CD4-positive, alpha-beta memory T cell (primary cell): ENCODE measurements at regions of chr1 and their contacts with region 1.

Region 1: DNA sequence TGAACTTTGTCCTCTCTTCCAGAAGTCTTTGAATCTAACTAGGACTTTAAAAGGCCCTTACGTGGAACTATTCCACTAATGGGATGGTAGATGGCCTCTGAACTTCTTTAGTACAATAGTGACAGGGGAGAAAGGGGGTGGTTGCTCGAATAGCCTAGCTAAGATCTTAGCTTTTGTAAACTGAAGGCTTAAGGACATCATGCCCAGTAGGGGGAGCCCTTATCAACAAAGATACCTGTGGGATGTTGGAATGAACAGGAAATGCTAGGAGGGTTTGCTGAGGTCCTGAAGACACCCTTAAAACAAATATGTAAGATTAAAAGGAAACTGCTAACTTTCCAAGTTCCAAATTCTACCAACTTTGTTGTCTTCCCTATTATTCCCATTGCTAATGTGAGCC is 33.2 kb downstream of the NHLH2 start:
- DNase-seq: peak; percentile 19 to 51 (median 31)
- H3K4me3 ChIP-seq: no peak overlapping the region
- H3K4me3 Mint-ChIP-seq: no peak overlapping the region
- H3K27ac ChIP-seq: no peak overlapping the region
- H3K27ac Mint-ChIP-seq: no peak overlapping the region
- H3K4me1 ChIP-seq: no peaks in the 10 kb centered on the region
- H3K4me1 Mint-ChIP-seq: peaks cover 0 to 2% (median 0%) of the 10 kb centered on the region in 4 donors
- H3K27me3 ChIP-seq: no peaks in the 10 kb centered on the region
- H3K27me3 Mint-ChIP-seq: peaks cover 11 to 12% of the 10 kb centered on the region in 2 donors

Region 2: DNA sequence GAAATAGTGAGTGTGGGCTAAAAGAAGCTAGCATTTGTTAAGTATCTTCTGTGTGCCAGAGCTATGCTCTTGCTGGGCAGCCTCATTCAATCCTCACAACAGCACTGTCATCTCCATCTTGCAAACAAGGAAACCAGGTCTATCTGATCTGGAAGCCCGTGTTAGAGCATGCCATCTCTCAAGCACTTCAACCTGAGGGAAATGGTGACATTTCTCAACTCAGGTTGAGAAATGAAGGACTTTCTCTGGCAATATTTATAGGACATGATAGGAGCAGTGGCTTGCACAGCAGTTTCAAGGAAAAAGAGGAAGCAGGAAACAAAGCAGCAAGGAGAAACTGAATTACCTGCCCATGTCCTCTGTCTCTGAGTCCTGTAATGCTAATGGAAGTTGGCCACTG is 44.1 kb before region 1 on chr1:
- CTCF ChIA-PET with region 1: no interaction called
- POLR2A ChIA-PET with region 1: no interaction called
- intact Hi-C with region 1: no loop called
- DNase-seq: no peak
- H3K4me3 ChIP-seq: no peak overlapping the region
- H3K4me3 Mint-ChIP-seq: no peak overlapping the region
- H3K27ac ChIP-seq: no peak overlapping the region
- H3K27ac Mint-ChIP-seq: no peak overlapping the region
- H3K4me1 ChIP-seq: no peaks in the 10 kb centered on the region
- H3K4me1 Mint-ChIP-seq: no peaks in the 10 kb centered on the region
- H3K27me3 ChIP-seq: no peaks in the 10 kb centered on the region
- H3K27me3 Mint-ChIP-seq: peaks cover 1 to 7% of the 10 kb centered on the region in 2 donors

Region 3: GRCh38 chr1:115949156-115949555 is 141.4 kb after region 1 on chr1:
- CTCF ChIA-PET with region 1: no interaction called
- POLR2A ChIA-PET with region 1: no interaction called
- intact Hi-C with region 1: no loop called
- DNase-seq: no peak
- H3K4me3 ChIP-seq: no peak overlapping the region
- H3K4me3 Mint-ChIP-seq: no peak overlapping the region
- H3K27ac ChIP-seq: no peak overlapping the region
- H3K27ac Mint-ChIP-seq: no peak overlapping the region
- H3K4me1 ChIP-seq: no peaks in the 10 kb centered on the region
- H3K4me1 Mint-ChIP-seq: no peaks in the 10 kb centered on the region
- H3K27me3 ChIP-seq: no peaks in the 10 kb centered on the region
- H3K27me3 Mint-ChIP-seq: peaks cover 7 to 14% of the 10 kb centered on the region in 2 donors

Region 4: DNA sequence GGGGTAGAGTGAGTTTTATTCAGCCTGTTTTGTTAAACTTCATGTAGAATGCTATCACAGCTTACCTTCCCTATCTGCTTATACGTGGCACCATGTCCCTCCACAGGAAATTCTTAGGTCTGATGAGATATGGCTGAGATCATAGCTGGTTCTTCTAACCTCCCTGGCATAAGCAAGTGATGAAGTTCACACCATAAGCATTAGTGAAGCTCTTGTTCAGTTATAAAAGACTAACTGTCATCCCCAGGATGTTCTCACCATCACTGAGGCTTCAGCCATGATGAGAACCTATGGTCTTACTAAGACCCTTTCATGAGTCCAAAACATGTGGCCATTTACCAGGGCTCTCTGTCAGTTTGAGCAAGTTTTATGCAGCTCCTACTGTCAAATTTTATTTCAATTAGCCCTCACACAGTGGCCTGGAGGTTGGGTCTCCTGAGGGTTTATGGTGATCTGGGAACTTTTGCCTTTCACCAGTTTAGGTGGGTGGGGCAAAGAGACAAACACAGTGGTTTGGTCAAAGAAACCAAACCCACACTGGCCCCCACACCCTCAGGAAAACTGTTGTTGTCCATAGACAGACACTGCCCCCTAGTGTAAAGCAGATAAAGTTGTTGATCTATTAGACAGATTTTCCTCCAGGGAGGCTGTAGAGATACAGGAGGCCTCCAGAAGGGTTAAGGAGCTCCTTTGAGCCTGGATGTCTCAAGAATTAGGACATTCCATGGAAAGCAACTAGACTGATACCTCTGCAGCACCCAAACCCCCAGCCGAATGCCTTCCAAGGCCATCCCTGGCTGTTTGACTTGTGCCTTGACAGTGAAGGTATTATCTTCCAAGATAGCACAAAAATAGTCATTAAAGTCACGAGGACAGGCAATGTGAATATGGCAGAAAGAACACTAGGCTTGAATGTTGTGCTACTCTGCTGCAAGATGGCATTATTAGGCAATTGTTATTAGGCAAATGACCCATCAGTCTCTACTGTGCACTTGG is 173.6 kb after region 1 on chr1:
- CTCF ChIA-PET with region 1: interaction called, 29 read pairs
- POLR2A ChIA-PET with region 1: interaction called, 3 read pairs
- intact Hi-C with region 1: no loop called
- DNase-seq: peak in 3 of 5 donors; percentile 20 to 36 (median 24)
- H3K4me3 ChIP-seq: no peak overlapping the region
- H3K4me3 Mint-ChIP-seq: no peak overlapping the region
- H3K27ac ChIP-seq: no peak overlapping the region
- H3K27ac Mint-ChIP-seq: no peak overlapping the region
- H3K4me1 ChIP-seq: peaks cover 4% of the 10 kb centered on the region
- H3K4me1 Mint-ChIP-seq: peaks cover 0 to 9% (median 7%) of the 10 kb centered on the region in 4 donors
- H3K27me3 ChIP-seq: no peaks in the 10 kb centered on the region
- H3K27me3 Mint-ChIP-seq: peaks cover 9% of the 10 kb centered on the region in 2 donors

Region 5: DNA sequence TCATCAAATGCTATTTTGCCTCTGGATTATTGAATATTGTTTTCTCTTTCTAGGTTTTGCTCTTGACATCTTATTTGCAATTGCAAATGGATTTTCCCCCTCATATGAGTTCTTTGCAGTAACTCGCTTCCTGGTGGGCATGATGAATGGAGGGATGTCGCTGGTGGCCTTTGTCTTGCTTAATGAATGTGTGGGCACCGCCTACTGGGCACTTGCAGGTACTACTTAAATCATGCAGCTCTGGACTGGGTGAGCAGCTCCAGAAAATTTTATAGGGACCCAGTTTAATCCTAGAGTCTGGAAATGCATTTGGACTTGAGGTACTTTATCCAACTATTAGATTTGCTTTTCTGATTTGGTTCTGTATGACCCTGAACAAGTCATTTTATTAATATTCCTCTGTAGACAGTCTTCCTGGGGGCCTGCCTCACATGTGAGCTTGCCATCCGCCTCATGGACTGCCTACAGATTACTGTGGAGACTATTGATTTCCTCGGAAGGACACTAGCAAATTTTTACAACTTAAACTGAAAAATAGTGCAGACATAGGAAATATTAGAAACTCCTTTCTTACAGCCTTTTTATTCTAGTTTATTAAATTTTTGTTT is 213.0 kb after region 1 on chr1:
- CTCF ChIA-PET with region 1: interaction called, 6 read pairs
- POLR2A ChIA-PET with region 1: no interaction called
- intact Hi-C with region 1: loop called (anchors 1 kb)
- DNase-seq: peak in 4 of 5 donors; percentile 11 to 34 (median 25)
- H3K4me3 ChIP-seq: no peak overlapping the region
- H3K4me3 Mint-ChIP-seq: no peak overlapping the region
- H3K27ac ChIP-seq: no peak overlapping the region
- H3K27ac Mint-ChIP-seq: no peak overlapping the region
- H3K4me1 ChIP-seq: no peaks in the 10 kb centered on the region
- H3K4me1 Mint-ChIP-seq: peaks cover 0 to 3% (median 2%) of the 10 kb centered on the region in 4 donors
- H3K27me3 ChIP-seq: no peaks in the 10 kb centered on the region
- H3K27me3 Mint-ChIP-seq: peaks cover 0 to 3% of the 10 kb centered on the region in 2 donors